Left ventricle myocardium superior (tissue), 1 donor: ENCODE measurements at regions of chr6 and their contacts with region 1.

Region 1: GRCh38 chr6:46848684-46849360 is 55.6 kb downstream of the MEP1A start:
- DNase-seq: peak; percentile 94
- ATAC-seq: peak; percentile 98

Region 2: GRCh38 chr6:46993846-46994245 is 145.0 kb after region 1 on chr6:
- intact Hi-C with region 1: loop called (anchors 5 kb)
- DNase-seq: no peak
- ATAC-seq: no peak

Region 3: GRCh38 chr6:47047479-47048407 is 198.9 kb after region 1 on chr6:
- intact Hi-C with region 1: loop called (anchors 5 kb)
- DNase-seq: peak; percentile 37
- ATAC-seq: peak; percentile 95